GM10248 (cell line): ENCODE measurements at regions of chr3 and their contacts with region 1.

Region 1: GRCh38 chr3:122942937-122943827 is 84.4 kb downstream of the SEMA5B start:
- DNase-seq: peak; percentile 75
- CTCF ChIP-seq: peak; percentile 78

Region 2: GRCh38 chr3:122392868-122393844 is 550.0 kb before region 1 on chr3:
- CTCF ChIA-PET with region 1: no interaction called
- POLR2A ChIA-PET with region 1: no interaction called
- DNase-seq: peak; percentile 41
- CTCF ChIP-seq: peak; percentile 58

Region 3: DNA sequence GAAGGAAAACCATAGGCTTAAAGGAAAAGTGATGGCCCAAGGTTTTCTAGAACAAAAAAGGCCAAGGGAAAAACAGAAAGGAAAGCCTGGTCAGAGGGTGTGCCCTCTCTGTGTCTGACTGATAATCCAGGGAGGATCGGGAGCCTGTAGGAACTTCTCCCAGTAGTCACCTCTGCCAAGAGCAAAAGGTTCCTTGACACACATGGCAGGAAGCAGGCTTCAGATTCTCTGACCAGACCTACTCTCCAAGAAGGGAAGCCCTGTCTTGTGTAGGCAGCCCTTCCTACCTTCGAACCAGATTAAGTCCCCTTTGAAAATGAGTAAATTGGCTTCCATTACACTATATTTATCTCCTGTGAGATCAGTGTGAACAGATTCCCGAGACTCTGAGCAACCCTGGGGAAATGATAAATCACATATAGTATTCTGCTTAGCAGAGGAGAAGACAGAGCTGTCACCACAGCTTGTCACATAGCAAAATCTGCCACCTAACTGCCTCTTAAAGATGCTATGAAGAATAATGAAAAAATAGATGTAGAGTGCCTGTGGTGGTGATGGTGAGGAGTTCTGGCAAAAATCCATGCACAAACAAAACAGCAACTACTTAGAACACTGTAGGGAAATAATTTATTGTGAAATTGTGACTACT is 223.8 kb before region 1 on chr3:
- CTCF ChIA-PET with region 1: no interaction called
- POLR2A ChIA-PET with region 1: no interaction called
- DNase-seq: no peak
- CTCF ChIP-seq: no peak

Region 4: DNA sequence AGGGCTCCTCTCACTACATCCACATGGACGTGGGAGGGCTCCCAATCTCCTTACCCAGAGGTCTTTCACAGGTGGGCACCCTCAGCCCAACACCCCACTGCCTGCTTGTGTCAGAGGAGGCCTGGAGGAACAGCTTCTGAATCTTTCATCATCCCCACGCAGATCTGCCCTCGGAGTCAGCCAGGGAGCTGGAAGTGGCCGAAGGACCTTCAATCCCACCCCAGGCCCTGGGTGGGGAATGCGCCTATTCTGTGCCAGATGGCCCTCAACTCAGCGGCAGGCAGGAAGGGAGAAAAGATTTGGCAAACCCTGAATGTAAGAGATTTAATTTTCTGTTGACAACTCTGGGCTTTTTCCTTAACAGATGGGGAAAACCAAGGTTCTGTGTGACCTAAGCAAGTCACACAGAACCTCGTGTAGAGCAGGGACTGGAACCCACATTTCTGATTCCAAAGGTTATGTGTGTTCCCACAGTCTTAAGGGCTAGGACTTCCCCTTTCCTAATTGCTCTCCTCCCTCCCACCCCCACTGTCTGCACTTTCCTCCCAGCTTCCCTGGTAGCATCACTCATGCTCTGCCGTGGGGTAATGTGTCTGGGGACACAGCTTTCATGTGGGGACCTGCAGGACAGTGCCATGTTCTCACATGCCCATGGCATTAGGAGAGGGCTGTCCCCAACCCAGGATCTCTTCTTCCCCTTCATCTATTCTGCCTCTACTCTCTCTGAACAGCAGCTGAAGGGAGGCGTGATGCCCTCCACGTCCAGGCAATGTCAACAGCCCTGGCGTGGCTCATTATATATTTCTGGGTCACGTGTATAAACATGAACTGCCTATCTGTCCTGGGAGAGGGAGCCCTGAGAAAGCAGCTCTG is 13.8 kb before region 1 on chr3:
- CTCF ChIA-PET with region 1: interaction called, 10 read pairs
- POLR2A ChIA-PET with region 1: no interaction called
- DNase-seq: no peak
- CTCF ChIP-seq: no peak

Region 5: DNA sequence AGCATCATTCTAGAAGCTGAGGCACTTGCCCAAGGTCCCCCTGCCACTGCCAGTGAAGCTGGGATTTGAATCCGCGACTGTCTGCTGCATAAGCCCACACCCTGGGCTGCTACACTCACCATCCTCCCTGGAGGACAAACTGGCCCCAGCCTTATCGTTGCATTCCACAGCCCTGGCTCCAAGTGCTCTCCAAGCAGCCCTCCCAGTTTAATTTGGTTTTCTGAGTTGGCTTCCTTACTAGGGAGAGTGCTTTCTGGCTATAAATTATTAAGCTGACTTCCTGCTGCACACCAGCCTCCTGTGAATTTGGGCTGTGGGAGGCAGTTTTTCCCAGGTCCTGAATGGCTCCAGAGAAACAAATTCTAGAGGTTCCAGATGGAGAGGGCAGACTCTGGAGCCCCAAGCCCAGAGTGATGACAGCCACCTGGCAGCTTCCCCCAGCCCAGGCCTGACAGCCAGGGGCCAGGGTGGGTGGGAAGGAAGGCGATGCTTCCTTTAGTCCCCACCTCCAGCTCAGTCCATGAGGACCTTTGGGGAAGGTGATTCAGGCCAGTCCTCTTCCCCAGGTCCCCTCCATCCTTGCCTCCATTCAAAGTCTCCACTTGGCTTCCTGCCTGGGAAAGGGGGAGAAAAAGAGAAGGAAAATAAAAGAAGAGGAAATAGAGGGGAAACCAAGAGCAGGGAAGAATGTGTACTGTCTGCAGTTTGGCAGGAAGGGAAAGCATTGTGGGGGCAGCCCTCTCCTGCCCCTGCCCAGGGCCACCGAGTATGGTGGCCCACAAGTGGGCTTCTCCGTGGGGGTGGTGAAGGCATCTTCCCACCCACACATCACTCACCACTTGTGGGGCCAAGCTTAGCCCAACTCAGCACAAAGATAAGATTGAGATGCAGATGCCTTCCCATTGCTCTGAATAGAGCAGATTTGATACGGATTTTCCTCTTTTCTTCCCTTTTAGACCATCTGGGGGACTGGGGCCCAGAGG is 14.8 kb after region 1 on chr3:
- CTCF ChIA-PET with region 1: interaction called, 21 read pairs
- POLR2A ChIA-PET with region 1: no interaction called
- DNase-seq: no peak
- CTCF ChIP-seq: no peak

Region 6: GRCh38 chr3:122964811-122965210 is 21.6 kb after region 1 on chr3:
- CTCF ChIA-PET with region 1: interaction called, 15 read pairs
- POLR2A ChIA-PET with region 1: no interaction called
- DNase-seq: no peak
- CTCF ChIP-seq: no peak

Region 7: DNA sequence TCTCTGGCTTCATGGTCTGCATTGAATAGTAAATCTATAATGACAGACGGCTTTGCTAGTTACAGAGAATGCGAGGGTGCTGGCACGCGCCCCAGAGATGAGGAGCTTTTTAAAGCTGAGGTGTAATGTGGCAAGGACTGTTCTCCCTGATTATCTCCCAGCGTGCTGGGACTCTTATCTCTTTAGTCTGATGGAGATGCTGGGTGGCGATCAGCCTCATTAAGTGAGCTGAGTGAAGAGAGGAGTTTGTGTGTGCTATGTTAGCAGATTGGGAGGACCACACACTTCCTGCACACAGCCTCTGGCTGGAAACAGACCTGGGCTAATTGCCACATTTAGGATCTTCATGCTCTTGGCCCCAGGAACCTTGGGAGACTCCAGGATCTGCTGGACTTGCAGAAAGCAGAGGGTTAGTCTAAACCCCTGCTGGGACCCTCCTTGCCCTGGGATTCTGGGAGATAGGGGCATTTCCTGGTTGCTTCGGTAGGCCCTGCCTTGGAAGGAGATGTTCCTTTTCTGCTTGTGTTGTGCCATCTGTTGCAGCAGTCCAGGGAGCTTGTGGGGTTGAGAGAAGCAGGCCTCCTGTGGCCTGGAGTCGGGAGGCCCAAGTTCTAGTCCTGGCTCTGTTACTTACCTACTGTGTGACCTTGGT is 138.7 kb after region 1 on chr3:
- CTCF ChIA-PET with region 1: no interaction called
- POLR2A ChIA-PET with region 1: no interaction called
- DNase-seq: no peak
- CTCF ChIP-seq: no peak